ENCODE measurements at regions of chr22 and their contacts with region 1.

Region 1: DNA sequence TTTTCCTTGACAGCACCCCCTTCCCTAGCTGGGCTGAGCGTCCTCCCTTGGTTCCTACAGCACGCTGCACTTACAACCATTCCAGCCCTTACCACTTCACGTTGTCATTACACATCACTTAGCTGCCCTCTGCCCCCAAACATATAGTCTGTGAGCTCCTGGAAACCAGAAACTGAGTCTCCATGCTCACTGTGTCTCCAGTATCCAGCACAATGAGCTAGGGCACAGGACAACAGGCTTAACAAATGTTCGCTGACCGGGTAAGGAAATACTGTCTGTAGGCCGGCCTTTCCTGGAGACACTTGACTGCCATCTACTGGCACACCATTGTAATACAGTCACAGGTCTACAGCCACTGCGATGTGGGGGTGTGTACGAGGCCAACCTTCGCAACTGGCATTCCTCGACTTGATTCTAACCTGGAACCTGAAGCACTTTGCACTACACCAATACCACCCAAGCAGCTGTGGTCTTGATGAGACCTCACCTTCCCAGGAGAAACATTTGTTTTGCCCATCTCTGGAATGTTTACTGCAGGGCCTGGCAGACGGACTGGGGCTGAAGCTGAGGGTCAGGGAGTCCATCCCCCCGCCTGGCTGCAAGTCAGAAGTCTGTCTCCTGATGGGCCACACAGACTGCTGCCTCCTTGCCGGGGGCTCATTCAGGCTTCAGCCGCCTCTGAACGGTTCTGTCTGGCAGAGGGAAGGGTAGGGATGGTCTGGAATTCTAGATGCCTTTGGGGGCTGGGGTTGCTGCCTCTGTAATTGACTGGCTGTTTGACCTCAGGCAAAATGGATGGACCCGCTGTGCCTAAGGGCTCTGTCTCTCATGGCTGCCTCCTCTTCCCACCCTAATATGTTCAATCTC is 72.0 kb downstream of the SYN3 start:
- DNase-seq: peak; percentile 73 to 83 (median 79)
- H3K4me3 ChIP-seq: no peak overlapping the region
- H3K27ac ChIP-seq: no peak overlapping the region
- H3K4me1 ChIP-seq: peaks cover 0 to 6% (median 0%) of the 10 kb centered on the region in 4 experiments
- H3K27me3 ChIP-seq: no peaks in the 10 kb centered on the region

Region 2: DNA sequence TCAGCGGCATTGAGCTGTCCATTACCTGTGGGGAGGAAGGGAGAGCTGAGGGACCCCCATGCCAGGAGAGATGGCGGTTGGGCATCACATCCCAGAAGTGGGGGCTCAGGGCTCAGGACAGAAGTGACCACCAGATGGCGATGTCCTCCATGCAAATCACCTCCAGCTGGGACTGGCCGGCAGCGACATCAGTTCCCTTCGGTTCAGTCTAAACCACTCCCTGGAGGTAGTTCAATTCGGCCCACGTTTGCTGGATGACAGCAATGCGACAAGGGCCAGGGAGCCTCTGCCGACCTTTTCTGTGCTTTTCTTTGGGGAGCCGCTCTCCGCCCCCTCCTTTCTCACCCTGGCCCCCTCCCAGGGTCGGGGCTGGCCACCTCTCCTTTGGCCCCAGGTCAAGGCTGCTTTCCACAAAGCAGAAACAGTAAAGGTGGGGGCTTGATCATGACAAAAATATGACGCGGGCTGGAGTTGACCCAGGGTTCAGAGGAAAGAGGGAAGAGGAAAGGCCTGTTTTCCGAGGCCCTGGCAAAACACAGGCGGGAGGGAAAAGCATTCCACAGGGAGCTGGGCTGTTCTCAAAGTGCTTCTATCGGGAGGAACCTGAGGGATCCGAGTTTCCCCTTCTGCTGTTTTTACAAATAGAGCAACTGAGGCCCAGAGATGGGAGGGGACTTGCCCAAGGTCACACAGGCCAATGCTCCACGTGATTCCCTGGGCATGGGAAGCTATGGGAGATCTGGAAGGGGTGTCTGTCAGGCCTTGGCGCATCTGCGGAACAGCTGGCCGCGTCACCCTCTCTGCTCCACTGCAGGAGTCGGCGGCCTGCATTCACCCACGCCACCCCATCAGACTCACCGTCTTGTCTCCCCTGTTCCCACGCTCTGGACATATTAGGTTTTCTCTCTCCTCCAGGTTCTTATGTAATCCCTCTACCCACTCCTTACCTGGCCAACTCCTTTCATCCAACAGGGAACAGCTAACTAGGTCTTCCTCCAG is 456.8 kb before region 1 on chr22:
- CTCF ChIA-PET with region 1: interaction called, 23 read pairs
- POLR2A ChIA-PET with region 1: no interaction called
- DNase-seq: peak; percentile 83 to 92 (median 89)
- H3K4me3 ChIP-seq: no peak overlapping the region
- H3K27ac ChIP-seq: no peak overlapping the region
- H3K4me1 ChIP-seq: peaks cover 0 to 4% (median 3%) of the 10 kb centered on the region in 4 experiments
- H3K27me3 ChIP-seq: peaks cover 0 to 3% (median 0%) of the 10 kb centered on the region in 5 experiments

Region 3: GRCh38 chr22:32810561-32811004 is 175.5 kb before region 1 on chr22:
- CTCF ChIA-PET with region 1: interaction called, 20 read pairs
- POLR2A ChIA-PET with region 1: no interaction called
- DNase-seq: no peak
- H3K4me3 ChIP-seq: no peak overlapping the region
- H3K27ac ChIP-seq: no peak overlapping the region
- H3K4me1 ChIP-seq: no peaks in the 10 kb centered on the region
- H3K27me3 ChIP-seq: no peaks in the 10 kb centered on the region

Region 4: GRCh38 chr22:32836280-32837123 is 149.6 kb before region 1 on chr22:
- CTCF ChIA-PET with region 1: interaction called, 27 read pairs
- POLR2A ChIA-PET with region 1: no interaction called
- DNase-seq: peak; percentile 36 to 57 (median 55)
- H3K4me3 ChIP-seq: no peak overlapping the region
- H3K27ac ChIP-seq: no peak overlapping the region
- H3K4me1 ChIP-seq: peaks cover 0 to 21% (median 8%) of the 10 kb centered on the region in 4 experiments
- H3K27me3 ChIP-seq: no peaks in the 10 kb centered on the region

Region 5: DNA sequence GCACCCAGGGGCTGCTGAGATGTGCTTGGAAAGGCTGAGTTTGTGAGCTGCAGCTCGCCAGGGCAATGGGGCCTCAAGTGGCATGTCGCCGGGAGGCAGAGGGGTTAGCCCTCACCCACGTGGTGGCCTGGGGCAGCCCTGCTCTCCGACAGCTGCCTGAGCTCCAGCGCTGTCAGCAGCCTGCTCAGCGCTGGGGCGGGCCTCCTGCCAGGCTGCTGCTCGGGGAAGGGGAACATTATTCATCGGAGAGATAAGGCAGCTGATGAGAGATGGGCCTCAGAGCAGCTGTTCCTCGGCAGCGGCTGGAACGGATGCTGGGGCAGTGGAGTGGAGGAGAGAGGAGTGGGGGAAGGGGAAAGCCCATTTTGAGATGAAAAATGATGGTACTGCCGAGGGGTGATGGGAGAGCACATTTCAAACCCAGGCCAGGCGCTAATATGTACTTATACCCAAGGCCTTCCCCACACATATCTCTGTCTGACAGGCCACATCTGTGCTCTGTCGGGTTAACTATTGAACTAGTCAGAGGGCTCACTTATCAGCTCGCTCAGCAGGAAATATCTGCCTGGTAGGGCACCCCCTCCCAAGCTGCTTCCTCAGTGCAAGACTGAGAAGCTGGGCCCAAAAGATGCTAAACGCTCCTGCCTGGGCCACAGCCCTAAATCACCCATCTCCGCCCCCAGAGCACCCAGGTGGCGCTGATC is 105.1 kb before region 1 on chr22:
- CTCF ChIA-PET with region 1: interaction called, 15 read pairs
- POLR2A ChIA-PET with region 1: no interaction called
- DNase-seq: peak; percentile 99 to 100 (median 100)
- H3K4me3 ChIP-seq: peak overlapping the region in 1 of 7 experiments; percentile 33
- H3K27ac ChIP-seq: peak overlapping the region; percentile 18 to 72
- H3K4me1 ChIP-seq: peaks cover 22 to 46% (median 34%) of the 10 kb centered on the region in 4 experiments
- H3K27me3 ChIP-seq: no peaks in the 10 kb centered on the region

Region 6: DNA sequence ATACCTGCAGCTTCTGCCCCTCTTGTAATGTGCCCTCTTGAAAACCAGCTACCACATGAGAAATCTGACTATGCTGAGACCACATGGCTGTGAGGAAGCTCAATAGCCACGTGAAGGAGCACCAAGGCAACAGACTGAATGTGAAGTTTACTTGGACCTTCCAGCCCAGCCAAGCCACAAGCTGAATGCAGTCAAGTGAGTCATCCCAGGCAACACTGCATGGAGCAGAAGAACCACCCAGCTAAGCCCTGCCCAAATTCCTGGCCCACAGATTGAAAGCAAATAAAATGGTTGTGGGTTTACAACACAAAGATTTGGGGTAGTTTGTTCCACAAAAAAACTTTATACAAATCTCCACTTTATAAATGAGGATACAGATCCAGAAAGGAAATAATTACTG is 70.1 kb before region 1 on chr22:
- CTCF ChIA-PET with region 1: no interaction called
- POLR2A ChIA-PET with region 1: no interaction called
- DNase-seq: peak in 1 of 3 donors; percentile 7
- H3K4me3 ChIP-seq: no peak overlapping the region
- H3K27ac ChIP-seq: no peak overlapping the region
- H3K4me1 ChIP-seq: peaks cover 0 to 7% (median 4%) of the 10 kb centered on the region in 4 experiments
- H3K27me3 ChIP-seq: no peaks in the 10 kb centered on the region

Region 7: DNA sequence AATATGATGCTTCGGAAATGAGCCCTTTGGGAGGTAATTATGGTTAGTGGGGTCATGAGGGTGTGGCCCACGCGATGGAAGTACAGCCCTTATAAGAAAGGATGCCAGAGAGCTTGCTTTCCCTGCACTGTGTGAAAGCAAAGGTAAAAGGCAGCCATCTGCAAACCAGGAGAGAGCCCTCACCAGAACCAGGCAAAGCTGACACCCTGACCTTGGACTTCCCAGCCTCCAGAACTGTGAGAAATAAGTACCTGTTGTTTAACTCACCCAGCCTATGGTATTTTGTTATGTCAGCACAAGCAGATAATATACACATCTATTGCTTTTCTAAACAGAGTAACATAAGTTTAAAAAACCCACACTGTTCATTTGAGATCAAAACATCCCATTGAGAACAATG is 21.4 kb after region 1 on chr22:
- CTCF ChIA-PET with region 1: no interaction called
- POLR2A ChIA-PET with region 1: no interaction called
- DNase-seq: no peak
- H3K4me3 ChIP-seq: no peak overlapping the region
- H3K27ac ChIP-seq: no peak overlapping the region
- H3K4me1 ChIP-seq: no peaks in the 10 kb centered on the region
- H3K27me3 ChIP-seq: no peaks in the 10 kb centered on the region

Region 8: DNA sequence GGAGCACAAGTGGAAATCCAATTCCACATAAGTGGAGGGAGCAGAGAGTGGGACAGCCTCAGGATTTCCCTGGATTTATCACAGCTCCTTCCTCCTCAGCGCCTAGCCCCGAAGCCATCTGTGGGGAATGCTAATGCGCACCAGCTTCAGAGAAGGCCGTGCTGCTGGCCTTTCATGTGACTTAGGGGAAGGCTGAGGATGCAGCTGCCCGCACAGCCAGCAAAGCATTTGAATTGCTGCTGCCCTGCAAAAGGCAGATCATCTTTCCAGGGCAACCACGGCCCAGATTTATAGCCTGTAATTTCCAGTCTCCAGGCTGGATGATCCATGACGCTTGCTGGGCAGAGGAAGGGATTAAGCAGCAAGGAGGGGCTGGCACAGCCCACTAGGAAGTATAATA is 42.1 kb after region 1 on chr22:
- CTCF ChIA-PET with region 1: no interaction called
- POLR2A ChIA-PET with region 1: no interaction called
- DNase-seq: no peak
- H3K4me3 ChIP-seq: no peak overlapping the region
- H3K27ac ChIP-seq: no peak overlapping the region
- H3K4me1 ChIP-seq: no peaks in the 10 kb centered on the region
- H3K27me3 ChIP-seq: peaks cover 0 to 15% (median 0%) of the 10 kb centered on the region in 5 experiments

Measured in common myeloid progenitor, CD34-positive (primary cell).